Activated naive CD4-positive, alpha-beta T cell treated with anti-CD3 and anti-CD28 coated beads, Interleukin-2, amount 10 ng/mL, durations not matched to agents 7 days and 5 days (primary cell): ENCODE measurements at regions of chr1 and their contacts with region 1.

Region 1: GRCh38 chr1:84442256-84442655 is 36.8 kb upstream of the RPF1 start:
- DNase-seq: no peak
- H3K4me3 Mint-ChIP-seq: no peak overlapping the region
- H3K27ac Mint-ChIP-seq: peak overlapping the region; percentile 85
- H3K4me1 Mint-ChIP-seq: peaks cover 22% of the 10 kb centered on the region
- H3K27me3 Mint-ChIP-seq: peaks cover 13% of the 10 kb centered on the region

Region 2: GRCh38 chr1:84143796-84144565 is 298.3 kb before region 1 on chr1 and contains the start of gene PRKACB:
- CTCF ChIA-PET with region 1: interaction called, 39 read pairs
- DNase-seq: peak; percentile 21
- H3K4me3 Mint-ChIP-seq: peak within 1 kb of the TSS; percentile 99
- H3K27ac Mint-ChIP-seq: peak within 1 kb of the TSS; percentile 97
- H3K4me1 Mint-ChIP-seq: peaks cover 36% of the 10 kb centered on the region
- H3K27me3 Mint-ChIP-seq: no peaks in the 10 kb centered on the region

Region 3: DNA sequence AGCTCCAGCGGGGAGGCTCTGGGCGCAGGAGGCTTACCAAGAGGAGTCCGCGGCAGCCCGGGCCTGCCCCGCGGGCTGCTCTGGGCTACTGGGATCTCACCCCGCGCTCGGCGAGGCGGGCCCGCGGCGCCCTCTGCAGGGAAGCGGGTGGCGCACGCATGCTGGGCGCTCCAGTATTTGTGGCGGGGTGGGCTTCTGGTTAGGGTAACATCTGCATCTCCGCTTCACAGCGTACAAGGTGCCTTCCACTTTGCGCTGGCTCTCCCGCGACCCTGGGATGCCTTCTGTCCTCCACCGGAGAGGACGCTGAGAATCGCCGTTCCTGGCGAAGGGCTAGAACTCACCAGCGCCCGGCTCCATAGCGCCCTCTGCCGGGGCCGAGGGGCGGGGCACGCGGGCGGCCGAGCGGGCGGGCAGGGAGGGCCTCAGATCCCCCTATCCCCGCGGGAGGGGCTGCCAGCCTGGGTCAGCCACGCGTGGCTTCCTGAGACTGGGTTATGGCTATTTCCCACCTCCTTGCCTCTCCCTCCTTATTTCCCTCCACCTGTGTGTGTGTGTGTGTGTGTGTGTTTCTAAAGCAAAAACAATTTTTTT is 178.6 kb after region 1 on chr1:
- CTCF ChIA-PET with region 1: interaction called, 28 read pairs
- DNase-seq: peak; percentile 82
- H3K4me3 Mint-ChIP-seq: peak overlapping the region; percentile 87
- H3K27ac Mint-ChIP-seq: peak overlapping the region; percentile 85
- H3K4me1 Mint-ChIP-seq: peaks cover 14% of the 10 kb centered on the region
- H3K27me3 Mint-ChIP-seq: peaks cover 14% of the 10 kb centered on the region

Region 4: DNA sequence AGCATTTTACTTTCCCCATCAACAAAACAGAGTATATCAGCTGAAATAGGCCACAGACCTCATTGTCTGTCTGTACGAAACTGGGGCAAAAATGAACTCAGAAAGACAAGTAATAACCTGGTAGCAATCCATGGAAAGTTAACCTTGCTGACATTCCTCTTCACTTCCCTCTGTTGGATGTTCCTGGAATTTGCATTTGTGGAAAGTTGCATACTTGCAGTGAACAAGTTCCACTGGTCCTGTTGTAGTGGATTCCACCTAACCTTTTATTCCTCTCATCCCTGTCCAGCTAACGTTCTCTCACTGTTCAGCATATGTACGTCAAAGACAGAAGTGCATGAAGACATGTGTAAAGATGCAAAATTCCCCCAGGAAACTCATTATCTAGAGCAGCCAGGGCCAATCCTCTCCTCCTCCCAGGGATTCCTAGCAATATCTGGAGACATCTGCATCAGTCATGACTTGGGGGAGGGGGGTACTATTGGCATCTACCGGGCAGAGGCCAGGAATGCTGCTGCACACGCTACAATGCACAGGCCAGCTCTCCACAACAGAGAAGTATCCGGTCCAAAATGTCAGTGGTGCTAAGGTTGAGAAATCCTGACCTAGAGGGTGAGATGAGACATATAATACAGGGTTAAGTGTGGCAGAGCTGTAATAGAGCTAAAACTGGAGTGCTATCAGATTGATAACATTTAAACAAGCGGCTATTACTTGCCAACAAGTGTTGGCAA is 442.6 kb after region 1 on chr1:
- CTCF ChIA-PET with region 1: no interaction called
- DNase-seq: no peak
- H3K4me3 Mint-ChIP-seq: no peak overlapping the region
- H3K27ac Mint-ChIP-seq: no peak overlapping the region
- H3K4me1 Mint-ChIP-seq: peaks cover 22% of the 10 kb centered on the region
- H3K27me3 Mint-ChIP-seq: peaks cover 13% of the 10 kb centered on the region